IMR-90 (cell line): ENCODE measurements at regions of chr12 and their contacts with region 1.

Region 1: DNA sequence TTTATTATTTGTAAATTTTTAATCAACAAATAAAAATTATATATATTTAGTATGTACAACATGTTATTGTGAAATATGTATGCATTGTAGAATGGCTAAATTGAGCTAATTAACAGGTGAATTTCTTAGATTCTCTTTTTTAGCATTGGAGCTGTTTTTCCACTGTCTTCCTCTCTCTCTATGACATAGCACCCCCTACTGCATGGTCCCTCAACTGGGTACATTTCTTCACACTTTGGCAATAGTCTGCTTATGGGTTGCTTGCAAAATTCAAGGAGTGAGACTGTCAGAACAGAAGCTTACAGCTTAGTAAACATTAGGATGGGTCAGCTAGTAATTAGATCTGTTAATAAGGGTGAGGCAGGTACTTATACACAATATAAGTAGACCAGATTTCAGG is 658.5 kb upstream of the MGAT4C start:
- DNase-seq: peak; percentile 58
- ATAC-seq: peak; percentile 88
- H3K4me3 ChIP-seq: no peak overlapping the region
- H3K27ac ChIP-seq: no peak overlapping the region
- H3K4me1 ChIP-seq: no peaks in the 10 kb centered on the region
- H3K27me3 ChIP-seq: no peaks in the 10 kb centered on the region
- CTCF ChIP-seq: peak; percentile 72
- POLR2A ChIP-seq: no peak
- RAD21 ChIP-seq: peak; percentile 85

Region 2: GRCh38 chr12:85920324-85920947 is 994.3 kb before region 1 on chr12:
- CTCF ChIA-PET with region 1: interaction called, 3 read pairs
- POLR2A ChIA-PET with region 1: no interaction called
- dilution Hi-C with region 1: no loop called
- in situ Hi-C with region 1: no loop called
- intact Hi-C with region 1: loop called (anchors 2 kb)
- DNase-seq: peak; percentile 6
- ATAC-seq: no peak; the same call in 1 of the 2 replicates
- H3K4me3 ChIP-seq: no peak overlapping the region
- H3K27ac ChIP-seq: no peak overlapping the region
- H3K4me1 ChIP-seq: no peaks in the 10 kb centered on the region
- H3K27me3 ChIP-seq: no peaks in the 10 kb centered on the region
- CTCF ChIP-seq: peak; percentile 56
- POLR2A ChIP-seq: no peak
- RAD21 ChIP-seq: peak; percentile 32

Region 3: GRCh38 chr12:85951823-85952222 is 962.9 kb before region 1 on chr12:
- CTCF ChIA-PET with region 1: no interaction called
- POLR2A ChIA-PET with region 1: no interaction called
- dilution Hi-C with region 1: no loop called
- in situ Hi-C with region 1: loop called (anchors 25 kb)
- intact Hi-C with region 1: loop called (anchors 1 kb)
- DNase-seq: peak; percentile 5
- ATAC-seq: peak; percentile 46; the same call in 1 of the 2 replicates
- H3K4me3 ChIP-seq: no peak overlapping the region
- H3K27ac ChIP-seq: no peak overlapping the region
- H3K4me1 ChIP-seq: no peaks in the 10 kb centered on the region
- H3K27me3 ChIP-seq: no peaks in the 10 kb centered on the region
- CTCF ChIP-seq: peak; percentile 34; the same call in 1 of the 2 replicates
- POLR2A ChIP-seq: no peak
- RAD21 ChIP-seq: peak; percentile 16; the same call in 1 of the 2 replicates

Region 4: GRCh38 chr12:85971800-85972199 is 942.9 kb before region 1 on chr12:
- CTCF ChIA-PET with region 1: no interaction called
- POLR2A ChIA-PET with region 1: no interaction called
- dilution Hi-C with region 1: no loop called
- in situ Hi-C with region 1: loop called (anchors 25 kb)
- intact Hi-C with region 1: loop called (anchors 5 kb)
- DNase-seq: no peak
- ATAC-seq: no peak
- H3K4me3 ChIP-seq: no peak overlapping the region
- H3K27ac ChIP-seq: no peak overlapping the region
- H3K4me1 ChIP-seq: no peaks in the 10 kb centered on the region
- H3K27me3 ChIP-seq: no peaks in the 10 kb centered on the region
- CTCF ChIP-seq: peak; percentile 12; the same call in 1 of the 2 replicates
- POLR2A ChIP-seq: no peak
- RAD21 ChIP-seq: no peak

Region 5: GRCh38 chr12:86429824-86430223 is 484.9 kb before region 1 on chr12:
- CTCF ChIA-PET with region 1: no interaction called
- POLR2A ChIA-PET with region 1: no interaction called
- dilution Hi-C with region 1: no loop called
- in situ Hi-C with region 1: no loop called
- intact Hi-C with region 1: no loop called
- DNase-seq: no peak
- ATAC-seq: no peak
- H3K4me3 ChIP-seq: no peak overlapping the region
- H3K27ac ChIP-seq: no peak overlapping the region
- H3K4me1 ChIP-seq: no peaks in the 10 kb centered on the region
- H3K27me3 ChIP-seq: no peaks in the 10 kb centered on the region
- CTCF ChIP-seq: no peak
- POLR2A ChIP-seq: no peak
- RAD21 ChIP-seq: no peak

Region 6: GRCh38 chr12:87054226-87054625 is 139.5 kb after region 1 on chr12:
- CTCF ChIA-PET with region 1: no interaction called
- POLR2A ChIA-PET with region 1: no interaction called
- dilution Hi-C with region 1: no loop called
- in situ Hi-C with region 1: no loop called
- intact Hi-C with region 1: no loop called
- DNase-seq: no peak
- ATAC-seq: no peak
- H3K4me3 ChIP-seq: no peak overlapping the region
- H3K27ac ChIP-seq: no peak overlapping the region
- H3K4me1 ChIP-seq: no peaks in the 10 kb centered on the region
- H3K27me3 ChIP-seq: no peaks in the 10 kb centered on the region
- CTCF ChIP-seq: no peak
- POLR2A ChIP-seq: no peak
- RAD21 ChIP-seq: no peak

Region 7: DNA sequence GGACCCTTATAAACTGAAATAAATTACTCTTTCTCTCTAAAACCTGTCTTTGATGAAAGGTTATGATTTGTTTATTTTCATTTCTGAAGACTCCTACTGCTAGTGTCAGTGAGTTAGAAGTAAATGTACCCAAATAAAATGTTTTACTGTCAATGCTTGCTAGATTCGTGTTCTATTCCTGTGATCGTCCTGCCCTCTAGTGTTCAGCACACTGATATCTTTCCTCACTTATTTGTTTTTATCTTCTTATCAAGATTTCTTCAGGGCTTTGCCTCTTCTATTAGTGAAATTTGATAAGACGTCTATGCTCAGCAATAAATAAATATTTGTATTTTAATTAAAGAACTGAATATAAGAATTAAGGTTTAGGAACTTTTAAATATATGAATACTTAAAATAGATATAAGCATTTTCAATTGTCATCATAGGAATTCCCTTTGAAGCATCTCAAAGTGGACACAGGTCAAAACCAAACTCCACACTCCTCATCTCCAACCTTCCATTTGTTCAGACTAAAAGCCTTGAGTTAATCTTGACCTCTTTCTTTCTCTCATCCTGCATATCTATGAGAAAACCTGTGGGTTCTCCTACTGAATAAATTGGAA is 1038.6 kb after region 1 on chr12:
- CTCF ChIA-PET with region 1: no interaction called
- POLR2A ChIA-PET with region 1: no interaction called
- dilution Hi-C with region 1: no loop called
- in situ Hi-C with region 1: no loop called
- intact Hi-C with region 1: loop called (anchors 5 kb)
- DNase-seq: peak; percentile 71
- ATAC-seq: peak; percentile 77
- H3K4me3 ChIP-seq: no peak overlapping the region
- H3K27ac ChIP-seq: no peak overlapping the region
- H3K4me1 ChIP-seq: no peaks in the 10 kb centered on the region
- H3K27me3 ChIP-seq: no peaks in the 10 kb centered on the region
- CTCF ChIP-seq: peak; percentile 86
- POLR2A ChIP-seq: no peak
- RAD21 ChIP-seq: peak; percentile 94

Region 8: DNA sequence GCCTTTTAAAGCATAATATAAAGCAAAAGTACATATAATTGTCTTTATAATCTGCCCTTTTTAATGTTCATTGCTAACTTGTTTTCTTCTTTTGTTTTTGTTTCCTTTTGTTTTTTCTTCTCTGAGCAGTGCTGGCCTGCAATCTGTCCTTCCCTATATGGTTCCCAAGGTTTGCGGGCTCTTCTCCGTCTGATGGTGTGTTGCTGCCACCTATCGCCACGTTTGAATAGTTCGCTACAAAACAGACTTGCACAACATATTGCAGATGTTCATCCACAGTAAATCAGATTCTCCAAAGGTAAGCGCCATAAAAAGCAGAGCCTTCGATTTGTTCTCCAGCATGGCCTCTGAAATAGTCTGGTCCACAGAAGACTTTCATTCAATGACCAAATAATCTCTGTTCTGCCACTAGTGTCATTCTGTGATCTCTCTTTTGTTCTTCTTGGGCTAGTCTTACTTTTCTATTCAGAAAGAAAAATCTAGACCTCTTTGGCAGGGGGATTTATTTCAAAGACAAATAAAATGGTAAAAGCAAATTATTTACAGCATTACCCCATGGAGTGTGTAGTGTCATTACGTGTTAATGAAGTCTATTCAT is 1081.0 kb after region 1 on chr12:
- CTCF ChIA-PET with region 1: no interaction called
- POLR2A ChIA-PET with region 1: no interaction called
- dilution Hi-C with region 1: no loop called
- in situ Hi-C with region 1: no loop called
- intact Hi-C with region 1: loop called (anchors 10 kb)
- DNase-seq: peak; percentile 73
- ATAC-seq: peak; percentile 99
- H3K4me3 ChIP-seq: no peak overlapping the region
- H3K27ac ChIP-seq: no peak overlapping the region
- H3K4me1 ChIP-seq: no peaks in the 10 kb centered on the region
- H3K27me3 ChIP-seq: no peaks in the 10 kb centered on the region; the same call in 1 of the 2 replicates
- CTCF ChIP-seq: peak; percentile 87
- POLR2A ChIP-seq: no peak
- RAD21 ChIP-seq: peak; percentile 92